GM12878 (cell line): ENCODE measurements at regions of chr1 and their contacts with region 1.

Region 1: DNA sequence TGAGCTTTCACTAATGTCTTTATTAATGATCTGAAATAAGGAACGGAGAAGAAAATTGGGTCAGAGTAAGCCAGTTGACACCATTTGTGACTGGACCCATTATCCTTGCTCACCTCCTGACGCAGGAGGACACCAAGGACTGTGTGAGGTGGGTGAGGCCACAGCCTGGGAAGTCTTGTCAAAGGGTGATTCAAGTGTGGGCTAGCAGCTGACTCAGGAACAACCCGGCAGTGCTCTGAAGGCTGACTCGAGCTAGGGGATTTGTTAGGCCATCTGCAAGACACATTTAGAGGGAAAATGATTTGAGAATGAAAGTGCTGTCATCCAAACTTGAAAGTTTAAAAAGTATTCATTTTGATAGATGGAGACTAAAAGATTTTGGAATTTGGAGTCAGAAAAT is 21.2 kb downstream of the PRRX1 start:
- DNase-seq: no peak
- ATAC-seq: no peak
- H3K4me3 ChIP-seq: no peak overlapping the region
- H3K27ac ChIP-seq: no peak overlapping the region
- H3K4me1 ChIP-seq: no peaks in the 10 kb centered on the region
- H3K27me3 ChIP-seq: no peaks in the 10 kb centered on the region
- CTCF ChIP-seq: no peak
- EP300 ChIP-seq: no peak
- POLR2A ChIP-seq: no peak
- RAD21 ChIP-seq: no peak

Region 2: GRCh38 chr1:169928438-169929209 is 756.5 kb before region 1 on chr1:
- CTCF ChIA-PET with region 1: interaction called, 3 read pairs
- POLR2A ChIA-PET with region 1: no interaction called
- RAD21 ChIA-PET with region 1: interaction called, 4 read pairs
- SMC1A ChIA-PET with region 1: interaction called, 4 read pairs
- in situ Hi-C with region 1: no loop called
- intact Hi-C with region 1: loop called (anchors 10 kb)
- DNase-seq: no peak
- ATAC-seq: peak; percentile 82
- H3K4me3 ChIP-seq: no peak overlapping the region
- H3K27ac ChIP-seq: no peak overlapping the region
- H3K4me1 ChIP-seq: peaks cover 6% of the 10 kb centered on the region
- H3K27me3 ChIP-seq: no peaks in the 10 kb centered on the region
- CTCF ChIP-seq: peak; percentile 53 to 73 (median 70)
- EP300 ChIP-seq: no peak
- POLR2A ChIP-seq: no peak
- RAD21 ChIP-seq: peak; percentile 88

Region 3: DNA sequence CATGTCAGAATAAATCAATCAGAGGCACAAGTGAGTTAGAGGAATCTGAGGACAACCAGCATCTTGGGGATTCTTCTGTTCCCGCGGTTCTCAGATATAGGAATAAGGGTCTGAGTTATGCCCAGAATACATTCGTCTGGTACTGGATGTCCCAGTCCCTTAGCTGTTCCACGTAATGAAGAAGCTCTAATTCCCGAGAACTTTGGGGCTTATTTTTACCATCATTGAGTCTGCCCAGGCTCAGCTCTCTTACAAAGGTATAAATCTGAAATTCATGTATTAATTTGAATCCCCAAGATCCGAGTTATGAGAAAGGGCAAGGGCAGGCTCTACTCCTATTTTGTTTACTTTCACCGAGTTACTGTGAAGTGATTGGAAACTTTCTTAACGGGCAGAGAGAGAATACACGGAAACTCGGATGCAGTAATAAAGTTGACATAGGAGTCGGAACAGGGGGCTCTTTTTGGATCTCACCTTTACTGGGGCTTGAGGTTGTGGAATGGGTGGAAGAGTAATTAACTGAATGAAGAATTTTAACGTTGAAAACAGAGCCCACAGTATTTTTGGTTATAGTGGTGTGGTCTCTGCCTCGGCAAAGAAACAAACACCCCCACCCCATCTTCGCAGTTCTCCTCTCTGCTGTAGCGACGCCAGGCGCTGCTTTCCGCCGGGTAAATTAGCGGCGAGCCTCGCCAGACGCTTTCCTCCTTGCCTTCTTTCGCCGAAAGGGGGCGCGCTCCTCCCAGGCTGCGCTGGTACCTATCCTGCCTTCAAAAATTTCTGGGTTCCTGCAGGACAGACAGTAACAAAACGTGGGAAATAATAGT is 14.2 kb before region 1 on chr1:
- CTCF ChIA-PET with region 1: interaction called, 152 read pairs
- POLR2A ChIA-PET with region 1: interaction called, 20 read pairs
- RAD21 ChIA-PET with region 1: interaction called, 71 read pairs
- SMC1A ChIA-PET with region 1: interaction called, 128 read pairs
- in situ Hi-C with region 1: no loop called
- intact Hi-C with region 1: no loop called
- DNase-seq: no peak
- ATAC-seq: peak; percentile 74
- H3K4me3 ChIP-seq: no peak overlapping the region
- H3K27ac ChIP-seq: no peak overlapping the region
- H3K4me1 ChIP-seq: no peaks in the 10 kb centered on the region
- H3K27me3 ChIP-seq: peaks cover 3 to 13% of the 10 kb centered on the region in 2 experiments; a peak in 3 of 4 replicates
- CTCF ChIP-seq: peak; percentile 54 to 65 (median 55)
- EP300 ChIP-seq: no peak
- POLR2A ChIP-seq: no peak
- RAD21 ChIP-seq: peak; percentile 51

Region 4: GRCh38 chr1:170698301-170699275 is 13.4 kb after region 1 on chr1:
- CTCF ChIA-PET with region 1: interaction called, 53 read pairs
- POLR2A ChIA-PET with region 1: interaction called, 4 read pairs
- RAD21 ChIA-PET with region 1: interaction called, 13 read pairs
- SMC1A ChIA-PET with region 1: interaction called, 20 read pairs
- in situ Hi-C with region 1: no loop called
- intact Hi-C with region 1: no loop called
- DNase-seq: no peak
- ATAC-seq: no peak
- H3K4me3 ChIP-seq: no peak overlapping the region
- H3K27ac ChIP-seq: no peak overlapping the region
- H3K4me1 ChIP-seq: no peaks in the 10 kb centered on the region
- H3K27me3 ChIP-seq: no peaks in the 10 kb centered on the region; a peak in 1 of 4 replicates
- CTCF ChIP-seq: no peak
- EP300 ChIP-seq: no peak
- POLR2A ChIP-seq: no peak
- RAD21 ChIP-seq: no peak

Region 5: DNA sequence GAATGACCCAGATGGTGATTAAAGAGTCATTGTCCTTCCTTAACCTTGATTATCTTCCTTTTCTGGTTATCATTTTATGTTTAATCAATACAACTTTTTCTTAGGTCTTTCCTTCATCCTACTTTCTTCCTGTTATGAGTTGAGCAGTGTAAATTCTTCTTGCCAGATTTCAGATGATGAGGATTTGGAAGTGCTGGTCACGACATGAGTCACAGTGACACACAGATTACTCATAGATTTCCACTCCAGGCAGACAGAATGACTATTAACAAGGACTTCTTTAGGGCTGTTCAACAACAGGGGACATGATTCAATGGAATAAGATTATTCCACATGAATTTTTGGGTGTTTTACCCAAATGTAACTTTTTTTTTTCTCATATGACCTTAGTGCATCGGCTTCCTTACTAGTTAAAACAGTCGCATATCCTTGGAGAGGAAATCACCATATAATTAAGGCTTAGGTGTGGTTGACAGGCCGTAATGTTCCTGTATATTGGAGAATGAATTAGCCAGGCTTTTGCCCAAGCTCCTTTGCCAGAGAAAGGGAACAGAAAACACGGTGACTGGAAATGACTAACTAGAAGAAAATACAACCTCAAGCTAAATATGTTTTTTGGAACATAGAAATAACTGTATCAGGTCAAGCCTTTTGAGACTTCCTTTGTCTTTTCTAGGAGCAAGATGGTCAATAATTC is 22.9 kb after region 1 on chr1:
- CTCF ChIA-PET with region 1: interaction called, 53 read pairs
- POLR2A ChIA-PET with region 1: interaction called, 6 read pairs
- RAD21 ChIA-PET with region 1: interaction called, 8 read pairs
- SMC1A ChIA-PET with region 1: interaction called, 15 read pairs
- in situ Hi-C with region 1: no loop called
- intact Hi-C with region 1: no loop called
- DNase-seq: no peak
- ATAC-seq: no peak
- H3K4me3 ChIP-seq: no peak overlapping the region
- H3K27ac ChIP-seq: no peak overlapping the region
- H3K4me1 ChIP-seq: no peaks in the 10 kb centered on the region
- H3K27me3 ChIP-seq: no peaks in the 10 kb centered on the region
- CTCF ChIP-seq: no peak
- EP300 ChIP-seq: no peak
- POLR2A ChIP-seq: no peak
- RAD21 ChIP-seq: no peak

Region 6: GRCh38 chr1:170929835-170930554 is 244.8 kb after region 1 on chr1:
- CTCF ChIA-PET with region 1: interaction called, 44 read pairs
- POLR2A ChIA-PET with region 1: no interaction called
- RAD21 ChIA-PET with region 1: interaction called, 9 read pairs
- SMC1A ChIA-PET with region 1: interaction called, 12 read pairs
- in situ Hi-C with region 1: no loop called
- intact Hi-C with region 1: loop called (anchors 5 kb)
- DNase-seq: peak; percentile 11
- ATAC-seq: peak; percentile 94
- H3K4me3 ChIP-seq: no peak overlapping the region
- H3K27ac ChIP-seq: no peak overlapping the region
- H3K4me1 ChIP-seq: peaks cover 5% of the 10 kb centered on the region; the same call in 1 of the 2 replicates
- H3K27me3 ChIP-seq: no peaks in the 10 kb centered on the region
- CTCF ChIP-seq: peak; percentile 68 to 73 (median 68)
- EP300 ChIP-seq: no peak
- POLR2A ChIP-seq: no peak
- RAD21 ChIP-seq: peak; percentile 86